ENCODE measurements at regions of chr15 and their contacts with region 1.

Region 1: DNA sequence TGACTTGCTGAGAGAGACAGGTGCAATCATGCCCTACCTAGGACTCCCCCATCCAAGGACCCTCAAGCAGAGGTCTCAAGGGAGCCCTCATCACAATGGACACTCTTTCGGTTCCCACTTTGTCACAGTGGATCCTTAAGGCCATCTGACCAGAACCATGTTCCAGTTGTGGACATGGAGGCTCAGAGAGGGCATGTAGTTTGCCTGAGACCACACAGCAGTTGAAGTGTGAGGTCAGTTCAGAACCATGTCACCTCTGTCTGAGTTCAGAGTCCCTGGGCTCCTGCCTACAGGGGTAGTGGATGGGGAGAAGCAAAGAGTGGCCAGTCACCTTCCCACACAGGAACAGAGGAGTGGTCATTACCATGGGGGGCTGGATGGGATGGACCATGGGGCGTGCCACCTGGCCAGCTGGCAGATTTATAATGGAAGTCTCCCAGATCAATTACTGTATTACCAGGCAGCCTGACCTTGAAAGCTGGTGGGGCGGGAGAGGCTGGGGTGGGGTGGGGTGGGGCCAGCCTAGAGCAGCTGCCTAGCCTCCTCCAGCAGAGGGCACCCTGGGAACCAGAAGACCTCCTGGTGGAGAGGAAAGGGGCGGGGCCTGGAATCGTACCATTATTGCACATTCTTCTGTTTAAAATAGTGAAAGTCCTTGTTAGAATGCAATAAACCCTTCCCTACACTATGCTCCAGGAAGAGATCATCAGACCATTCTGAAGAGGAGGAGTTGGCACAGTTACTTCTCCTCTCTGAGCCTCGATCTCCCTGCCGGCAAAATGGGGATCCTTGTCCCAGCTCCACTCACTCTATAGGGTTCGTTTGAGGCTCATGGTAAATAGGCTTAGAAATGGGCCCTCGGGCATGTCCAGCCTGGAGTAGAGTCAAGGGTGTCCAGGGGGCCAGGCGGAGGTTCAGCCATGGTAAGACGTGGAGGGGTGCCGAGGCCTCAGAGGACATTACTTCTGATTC is 26.9 kb upstream of the LINGO1 start:
- DNase-seq: peak; percentile 21
- H3K4me3 ChIP-seq: no peak overlapping the region
- H3K27ac ChIP-seq: no peak overlapping the region
- H3K4me1 ChIP-seq: no peaks in the 10 kb centered on the region
- H3K27me3 ChIP-seq: peaks cover 4% of the 10 kb centered on the region
- CTCF ChIP-seq: peak in 1 of 2 donors; percentile 28

Region 2: DNA sequence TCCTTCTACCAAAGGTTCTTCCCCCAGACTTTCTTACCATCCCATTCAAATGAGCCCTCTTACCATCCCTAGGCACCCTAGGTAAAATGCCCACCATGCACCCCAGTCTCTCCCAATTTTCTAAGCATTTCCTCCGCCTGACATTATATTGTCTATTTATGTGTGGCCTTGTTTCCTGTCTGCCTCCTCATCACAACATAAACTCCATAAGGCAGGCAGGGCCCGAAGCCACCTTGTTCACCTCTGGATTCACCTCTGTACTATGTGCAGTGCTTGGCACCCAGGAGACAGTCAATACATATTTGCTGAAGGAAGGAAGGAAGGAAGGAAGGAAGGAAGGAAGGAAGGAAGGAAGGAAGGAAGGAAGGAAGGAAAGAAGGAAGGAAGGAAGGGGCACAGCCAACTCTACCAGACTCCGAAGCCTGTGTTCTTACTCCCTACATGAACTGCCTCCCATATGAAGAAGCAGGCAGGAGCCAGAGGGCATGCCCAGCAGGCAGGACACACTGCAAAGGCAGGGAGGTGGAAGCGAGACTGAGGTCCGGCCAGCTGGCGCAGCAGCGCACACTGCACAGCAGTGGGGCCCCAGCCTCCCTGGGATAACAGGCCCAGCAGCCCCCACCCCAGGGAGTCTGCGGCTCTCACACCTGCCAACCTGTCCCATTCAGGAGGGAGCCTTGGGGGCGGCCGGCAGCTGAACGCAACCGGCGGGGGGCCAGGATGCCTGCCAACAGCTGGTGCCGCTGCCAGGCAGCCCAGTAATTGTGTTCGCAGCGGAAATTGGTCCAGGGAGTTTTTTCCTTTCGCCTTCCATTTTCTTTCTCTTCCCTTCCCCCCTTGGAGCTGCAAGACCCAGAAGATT is 79.0 kb after region 1 on chr15:
- CTCF ChIA-PET with region 1: no interaction called
- dilution Hi-C with region 1: loop called (anchors 5 kb)
- in situ Hi-C with region 1: no loop called
- intact Hi-C with region 1: no loop called
- DNase-seq: no peak
- H3K4me3 ChIP-seq: no peak overlapping the region
- H3K27ac ChIP-seq: no peak overlapping the region
- H3K4me1 ChIP-seq: no peaks in the 10 kb centered on the region
- H3K27me3 ChIP-seq: peaks cover 5% of the 10 kb centered on the region
- CTCF ChIP-seq: no peak